Natural killer cell (primary cell): ENCODE measurements at regions of chr17 and their contacts with region 1.

Region 1: GRCh38 chr17:47776330-47777197 is 43.5 kb downstream of the TBX21 start:
- DNase-seq: peak in 1 of 2 donors; percentile 78
- ATAC-seq: peak; percentile 74 to 98 (median 92)
- H3K4me3 ChIP-seq: no peak overlapping the region
- H3K4me3 Mint-ChIP-seq: no peak overlapping the region
- H3K27ac ChIP-seq: no peak overlapping the region
- H3K27ac Mint-ChIP-seq: no peak overlapping the region
- H3K4me1 ChIP-seq: peaks cover 3% of the 10 kb centered on the region
- H3K4me1 Mint-ChIP-seq: peaks cover 0 to 7% of the 10 kb centered on the region in 2 donors
- H3K27me3 ChIP-seq: peaks cover 4% of the 10 kb centered on the region
- H3K27me3 Mint-ChIP-seq: peaks cover 18 to 25% of the 10 kb centered on the region in 2 donors
- CTCF ChIP-seq: peak; percentile 77

Region 2: GRCh38 chr17:47789611-47790561 is 13.3 kb after region 1 on chr17:
- intact Hi-C with region 1: loop called (anchors 1 kb)
- DNase-seq: peak; percentile 52 to 74
- ATAC-seq: peak; percentile 88 to 99 (median 98)
- H3K4me3 ChIP-seq: peak overlapping the region; percentile 29
- H3K4me3 Mint-ChIP-seq: peak overlapping the region; percentile 84
- H3K27ac ChIP-seq: no peak overlapping the region
- H3K27ac Mint-ChIP-seq: no peak overlapping the region
- H3K4me1 ChIP-seq: peaks cover 8% of the 10 kb centered on the region
- H3K4me1 Mint-ChIP-seq: peaks cover 11 to 17% of the 10 kb centered on the region in 2 donors
- H3K27me3 ChIP-seq: peaks cover 27% of the 10 kb centered on the region
- H3K27me3 Mint-ChIP-seq: peaks cover 37 to 42% of the 10 kb centered on the region in 2 donors
- CTCF ChIP-seq: peak; percentile 72

Region 3: DNA sequence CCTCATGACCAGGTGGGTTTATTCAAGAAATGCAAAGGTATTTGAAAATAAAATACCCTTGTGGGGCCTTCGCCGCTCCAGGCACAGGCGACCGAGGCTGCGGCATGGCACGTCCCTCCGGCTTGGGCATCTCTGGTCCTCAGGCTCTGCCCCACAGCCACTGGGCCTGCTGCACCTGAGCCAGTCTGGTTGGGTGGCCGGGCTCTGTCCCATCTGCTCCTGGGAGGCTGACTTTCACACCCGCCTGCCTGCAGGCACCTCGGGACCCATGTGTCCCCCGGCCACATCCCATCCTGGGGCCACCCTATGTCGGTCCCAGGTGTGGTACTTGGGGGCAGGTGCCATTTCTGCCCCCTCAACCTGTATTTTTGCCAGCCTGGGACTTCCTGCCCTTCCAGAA is 24.1 kb after region 1 on chr17:
- intact Hi-C with region 1: no loop called
- DNase-seq: no peak
- ATAC-seq: no peak
- H3K4me3 ChIP-seq: no peak overlapping the region
- H3K4me3 Mint-ChIP-seq: no peak overlapping the region
- H3K27ac ChIP-seq: no peak overlapping the region
- H3K27ac Mint-ChIP-seq: no peak overlapping the region
- H3K4me1 ChIP-seq: no peaks in the 10 kb centered on the region
- H3K4me1 Mint-ChIP-seq: no peaks in the 10 kb centered on the region
- H3K27me3 ChIP-seq: no peaks in the 10 kb centered on the region
- H3K27me3 Mint-ChIP-seq: peaks cover 0 to under 1% of the 10 kb centered on the region in 2 donors
- CTCF ChIP-seq: no peak